GM12878 (cell line): ENCODE measurements at regions of chr14 and their contacts with region 1.

Region 1: GRCh38 chr14:62743560-62743959 is 301.7 kb downstream of the KCNH5 start:
- DNase-seq: no peak
- ATAC-seq: no peak
- H3K4me3 ChIP-seq: no peak overlapping the region
- H3K27ac ChIP-seq: no peak overlapping the region
- H3K4me1 ChIP-seq: no peaks in the 10 kb centered on the region
- H3K27me3 ChIP-seq: no peaks in the 10 kb centered on the region
- CTCF ChIP-seq: no peak
- EP300 ChIP-seq: no peak
- POLR2A ChIP-seq: no peak
- RAD21 ChIP-seq: no peak

Region 2: DNA sequence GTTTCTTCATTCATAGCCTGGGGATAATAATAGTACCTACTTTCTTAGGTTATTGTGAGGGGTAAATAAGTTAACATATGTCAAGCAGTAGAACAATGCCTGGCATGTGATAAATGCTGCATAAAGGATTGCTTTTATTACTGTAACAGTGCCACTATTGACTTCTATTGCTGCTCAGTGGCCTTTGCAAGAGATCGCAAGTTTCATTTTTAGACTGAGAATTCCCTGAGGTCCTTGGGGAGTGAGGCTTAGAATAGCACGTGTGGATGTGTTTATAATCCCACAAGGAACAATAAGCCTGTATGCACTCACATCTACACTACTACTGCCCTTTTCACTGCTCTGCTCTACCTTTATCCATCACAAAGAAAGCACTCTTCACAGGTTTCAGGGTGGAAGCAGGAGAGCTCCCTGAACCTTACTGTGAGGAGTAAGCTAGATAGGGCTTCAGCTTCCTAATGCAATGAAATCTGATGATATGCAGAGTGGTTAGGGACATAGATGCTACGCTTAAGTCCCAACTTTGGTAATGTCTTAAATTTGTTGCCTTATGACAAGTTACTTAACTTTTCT is 678.7 kb before region 1 on chr14:
- CTCF ChIA-PET with region 1: no interaction called
- POLR2A ChIA-PET with region 1: interaction called, 10 read pairs
- RAD21 ChIA-PET with region 1: no interaction called
- SMC1A ChIA-PET with region 1: no interaction called
- in situ Hi-C with region 1: no loop called
- intact Hi-C with region 1: no loop called
- DNase-seq: no peak
- ATAC-seq: no peak
- H3K4me3 ChIP-seq: no peak overlapping the region
- H3K27ac ChIP-seq: no peak overlapping the region
- H3K4me1 ChIP-seq: no peaks in the 10 kb centered on the region
- H3K27me3 ChIP-seq: peaks cover 0 to under 1% of the 10 kb centered on the region in 2 experiments; a peak in 1 of 4 replicates
- CTCF ChIP-seq: no peak
- EP300 ChIP-seq: no peak
- POLR2A ChIP-seq: no peak
- RAD21 ChIP-seq: no peak

Region 3: DNA sequence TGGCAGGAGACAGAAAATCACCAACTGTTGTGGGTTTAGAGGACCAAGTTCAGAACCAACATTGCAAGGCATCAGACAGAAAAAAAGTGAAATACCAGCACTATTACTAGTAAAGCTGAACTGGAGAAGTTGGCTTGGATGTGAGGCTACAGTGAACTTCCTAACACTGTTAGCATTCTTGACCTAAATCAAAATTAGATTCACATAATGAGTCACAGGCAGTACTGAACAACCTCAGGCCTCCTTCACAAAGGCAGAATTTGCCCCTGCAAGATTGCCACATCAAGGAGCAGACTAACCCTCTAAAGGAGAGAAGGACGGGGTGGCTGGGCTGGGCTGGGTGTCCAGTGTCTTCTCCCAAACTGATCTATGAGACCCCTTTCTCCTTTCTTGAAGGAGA is 441.6 kb before region 1 on chr14:
- CTCF ChIA-PET with region 1: no interaction called
- POLR2A ChIA-PET with region 1: no interaction called
- RAD21 ChIA-PET with region 1: no interaction called
- SMC1A ChIA-PET with region 1: no interaction called
- in situ Hi-C with region 1: no loop called
- intact Hi-C with region 1: no loop called
- DNase-seq: no peak
- ATAC-seq: no peak
- H3K4me3 ChIP-seq: no peak overlapping the region
- H3K27ac ChIP-seq: no peak overlapping the region
- H3K4me1 ChIP-seq: no peaks in the 10 kb centered on the region
- H3K27me3 ChIP-seq: no peaks in the 10 kb centered on the region
- CTCF ChIP-seq: no peak
- EP300 ChIP-seq: no peak
- POLR2A ChIP-seq: no peak
- RAD21 ChIP-seq: no peak

Region 4: GRCh38 chr14:62768753-62769152 is 25.2 kb after region 1 on chr14:
- CTCF ChIA-PET with region 1: no interaction called
- POLR2A ChIA-PET with region 1: no interaction called
- RAD21 ChIA-PET with region 1: no interaction called
- SMC1A ChIA-PET with region 1: no interaction called
- in situ Hi-C with region 1: no loop called
- intact Hi-C with region 1: no loop called
- DNase-seq: no peak
- ATAC-seq: no peak
- H3K4me3 ChIP-seq: no peak overlapping the region
- H3K27ac ChIP-seq: no peak overlapping the region
- H3K4me1 ChIP-seq: no peaks in the 10 kb centered on the region
- H3K27me3 ChIP-seq: no peaks in the 10 kb centered on the region
- CTCF ChIP-seq: no peak
- EP300 ChIP-seq: no peak
- POLR2A ChIP-seq: no peak
- RAD21 ChIP-seq: no peak

Region 5: GRCh38 chr14:62800577-62800976 is 57.0 kb after region 1 on chr14:
- CTCF ChIA-PET with region 1: no interaction called
- POLR2A ChIA-PET with region 1: no interaction called
- RAD21 ChIA-PET with region 1: no interaction called
- SMC1A ChIA-PET with region 1: no interaction called
- in situ Hi-C with region 1: no loop called
- intact Hi-C with region 1: no loop called
- DNase-seq: no peak
- ATAC-seq: no peak
- H3K4me3 ChIP-seq: no peak overlapping the region
- H3K27ac ChIP-seq: no peak overlapping the region
- H3K4me1 ChIP-seq: no peaks in the 10 kb centered on the region
- H3K27me3 ChIP-seq: no peaks in the 10 kb centered on the region
- CTCF ChIP-seq: no peak
- EP300 ChIP-seq: no peak
- POLR2A ChIP-seq: no peak
- RAD21 ChIP-seq: no peak

Region 6: GRCh38 chr14:62854951-62855350 is 111.4 kb after region 1 on chr14:
- CTCF ChIA-PET with region 1: no interaction called
- POLR2A ChIA-PET with region 1: no interaction called
- RAD21 ChIA-PET with region 1: no interaction called
- SMC1A ChIA-PET with region 1: no interaction called
- in situ Hi-C with region 1: no loop called
- intact Hi-C with region 1: no loop called
- DNase-seq: no peak
- ATAC-seq: no peak
- H3K4me3 ChIP-seq: no peak overlapping the region
- H3K27ac ChIP-seq: no peak overlapping the region
- H3K4me1 ChIP-seq: no peaks in the 10 kb centered on the region
- H3K27me3 ChIP-seq: no peaks in the 10 kb centered on the region
- CTCF ChIP-seq: no peak
- EP300 ChIP-seq: no peak
- POLR2A ChIP-seq: no peak
- RAD21 ChIP-seq: no peak